OCI-LY7 (cell line): ENCODE measurements at regions of chr1 and their contacts with region 1.

Region 1: GRCh38 chr1:156383023-156383422 is 14.0 kb downstream of the RHBG start:
- DNase-seq: peak; percentile 71
- H3K4me3 ChIP-seq: no peak overlapping the region
- H3K27ac ChIP-seq: no peak overlapping the region
- H3K4me1 ChIP-seq: peaks cover 3% of the 10 kb centered on the region
- CTCF ChIP-seq: peak; percentile 86

Region 2: GRCh38 chr1:156445789-156446263 is 62.8 kb after region 1 on chr1:
- CTCF ChIA-PET with region 1: interaction called, 40 read pairs
- POLR2A ChIA-PET with region 1: interaction called, 10 read pairs
- intact Hi-C with region 1: loop called (anchors 1 kb)
- DNase-seq: peak; percentile 74
- H3K4me3 ChIP-seq: no peak overlapping the region
- H3K27ac ChIP-seq: no peak overlapping the region
- H3K4me1 ChIP-seq: peaks cover 6% of the 10 kb centered on the region
- CTCF ChIP-seq: peak; percentile 98

Region 3: GRCh38 chr1:156480411-156481192 is 97.6 kb after region 1 on chr1:
- CTCF ChIA-PET with region 1: no interaction called
- POLR2A ChIA-PET with region 1: no interaction called
- intact Hi-C with region 1: no loop called
- DNase-seq: peak; percentile 90
- H3K4me3 ChIP-seq: peak overlapping the region; percentile 6
- H3K27ac ChIP-seq: peak overlapping the region; percentile 61
- H3K4me1 ChIP-seq: peaks cover 56% of the 10 kb centered on the region
- CTCF ChIP-seq: peak; percentile 89